CD4-positive, alpha-beta memory T cell (primary cell): ENCODE measurements at regions of chr7 and their contacts with region 1.

Region 1: DNA sequence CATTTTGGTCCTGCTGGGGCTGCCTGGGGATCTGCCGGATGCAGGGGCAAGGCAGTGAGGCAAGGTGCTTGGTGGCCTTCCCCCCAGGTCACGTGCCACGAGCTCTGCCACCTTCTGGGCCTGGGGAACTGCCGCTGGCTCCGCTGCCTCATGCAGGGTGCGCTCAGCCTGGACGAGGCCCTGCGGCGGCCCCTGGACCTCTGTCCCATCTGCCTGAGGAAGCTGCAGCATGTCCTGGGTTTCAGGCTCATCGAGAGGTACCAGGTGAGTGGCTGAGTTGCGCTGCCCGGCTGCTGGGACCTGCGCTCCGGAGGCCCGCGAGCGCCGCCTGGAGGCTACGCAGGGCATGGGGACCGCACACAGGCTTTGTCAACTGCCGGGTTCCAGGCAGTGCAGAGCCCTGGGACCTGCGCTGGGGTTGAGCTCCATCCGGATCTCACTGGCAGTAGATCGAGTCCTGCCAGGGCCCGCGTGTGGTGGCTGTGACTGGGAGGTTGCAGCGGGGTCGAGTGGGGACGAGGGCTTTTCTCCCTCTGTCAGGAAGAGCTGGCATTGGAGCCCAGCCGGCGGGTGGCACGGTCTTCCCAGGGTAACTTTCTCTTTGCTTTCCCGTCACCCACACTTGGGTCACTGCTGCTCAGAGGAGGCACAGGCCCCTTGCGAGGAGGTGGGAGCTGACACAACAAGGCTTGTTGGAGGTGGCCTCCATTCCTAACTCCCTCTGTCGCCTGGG is 21.7 kb downstream of the AMZ1 start:
- DNase-seq: peak; percentile 75 to 81 (median 79)
- H3K4me3 ChIP-seq: peak overlapping the region in 1 of 2 donors; percentile 50
- H3K4me3 Mint-ChIP-seq: peak overlapping the region; percentile 69 to 87 (median 78)
- H3K27ac ChIP-seq: peak overlapping the region; percentile 42
- H3K27ac Mint-ChIP-seq: peak overlapping the region in 6 of 7 donors; percentile 86 to 96 (median 90)
- H3K4me1 ChIP-seq: peaks cover 41% of the 10 kb centered on the region
- H3K4me1 Mint-ChIP-seq: peaks cover 19 to 40% (median 27%) of the 10 kb centered on the region in 4 donors
- H3K27me3 ChIP-seq: no peaks in the 10 kb centered on the region
- H3K27me3 Mint-ChIP-seq: no peaks in the 10 kb centered on the region

Region 2: GRCh38 chr7:2477447-2478398 is 232.0 kb before region 1 on chr7:
- CTCF ChIA-PET with region 1: interaction called, 21 read pairs
- POLR2A ChIA-PET with region 1: no interaction called
- intact Hi-C with region 1: loop called (anchors 1 kb)
- DNase-seq: peak; percentile 54 to 69 (median 64)
- H3K4me3 ChIP-seq: no peak overlapping the region
- H3K4me3 Mint-ChIP-seq: peak overlapping the region in 2 of 8 donors; percentile 22 to 31
- H3K27ac ChIP-seq: no peak overlapping the region
- H3K27ac Mint-ChIP-seq: no peak overlapping the region
- H3K4me1 ChIP-seq: peaks cover 13% of the 10 kb centered on the region
- H3K4me1 Mint-ChIP-seq: peaks cover 0 to 4% (median 0%) of the 10 kb centered on the region in 4 donors
- H3K27me3 ChIP-seq: no peaks in the 10 kb centered on the region
- H3K27me3 Mint-ChIP-seq: no peaks in the 10 kb centered on the region

Region 3: DNA sequence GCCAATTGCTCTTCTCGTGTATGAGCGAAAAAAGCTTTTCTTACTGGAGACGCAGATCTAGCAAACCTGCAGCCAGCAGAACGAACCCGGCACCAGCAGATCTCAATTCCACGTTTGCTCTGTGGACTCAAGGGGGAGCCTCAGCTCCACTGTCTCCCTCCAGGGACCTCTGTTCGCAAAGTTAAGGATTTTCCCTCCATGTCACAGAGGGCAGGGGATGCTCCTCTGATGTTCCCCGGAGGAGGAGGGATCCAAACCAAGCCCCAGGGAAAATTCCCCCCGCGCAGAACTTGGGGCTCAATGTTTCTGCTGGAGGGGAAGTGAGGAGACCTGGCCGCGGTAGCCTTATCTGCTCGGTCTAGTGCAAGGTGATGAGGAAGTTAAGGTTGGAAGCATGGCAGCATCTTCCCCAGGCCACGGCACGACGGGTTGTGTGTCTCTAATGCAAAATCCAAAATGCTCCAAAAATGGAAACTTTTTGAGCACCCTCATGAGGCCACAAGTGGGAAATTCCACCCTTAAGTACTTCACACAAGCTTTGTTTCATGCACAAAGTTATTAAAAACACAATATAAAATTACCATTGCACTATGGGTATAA is 141.9 kb before region 1 on chr7:
- CTCF ChIA-PET with region 1: interaction called, 11 read pairs
- POLR2A ChIA-PET with region 1: no interaction called
- intact Hi-C with region 1: no loop called
- DNase-seq: no peak
- H3K4me3 ChIP-seq: no peak overlapping the region
- H3K4me3 Mint-ChIP-seq: no peak overlapping the region
- H3K27ac ChIP-seq: no peak overlapping the region
- H3K27ac Mint-ChIP-seq: no peak overlapping the region
- H3K4me1 ChIP-seq: peaks cover 7% of the 10 kb centered on the region
- H3K4me1 Mint-ChIP-seq: peaks cover 8 to 15% (median 10%) of the 10 kb centered on the region in 4 donors
- H3K27me3 ChIP-seq: no peaks in the 10 kb centered on the region
- H3K27me3 Mint-ChIP-seq: no peaks in the 10 kb centered on the region

Region 4: GRCh38 chr7:2680792-2681490 is 28.8 kb before region 1 on chr7:
- CTCF ChIA-PET with region 1: interaction called, 220 read pairs
- POLR2A ChIA-PET with region 1: no interaction called
- intact Hi-C with region 1: no loop called
- DNase-seq: peak in 4 of 5 donors; percentile 22 to 33 (median 30)
- H3K4me3 ChIP-seq: no peak overlapping the region
- H3K4me3 Mint-ChIP-seq: no peak overlapping the region
- H3K27ac ChIP-seq: no peak overlapping the region
- H3K27ac Mint-ChIP-seq: no peak overlapping the region
- H3K4me1 ChIP-seq: no peaks in the 10 kb centered on the region
- H3K4me1 Mint-ChIP-seq: no peaks in the 10 kb centered on the region
- H3K27me3 ChIP-seq: no peaks in the 10 kb centered on the region
- H3K27me3 Mint-ChIP-seq: peaks cover 4 to 7% of the 10 kb centered on the region in 2 donors

Region 5: GRCh38 chr7:2720582-2721491 is 11.1 kb after region 1 on chr7:
- CTCF ChIA-PET with region 1: interaction called, 64 read pairs
- POLR2A ChIA-PET with region 1: interaction called, 30 read pairs
- intact Hi-C with region 1: loop called (anchors 1 kb)
- DNase-seq: peak; percentile 41 to 74 (median 46)
- H3K4me3 ChIP-seq: no peak overlapping the region
- H3K4me3 Mint-ChIP-seq: peak overlapping the region in 5 of 8 donors; percentile 18 to 67 (median 40)
- H3K27ac ChIP-seq: no peak overlapping the region
- H3K27ac Mint-ChIP-seq: peak overlapping the region in 3 of 7 donors; percentile 16 to 53 (median 43)
- H3K4me1 ChIP-seq: peaks cover 48% of the 10 kb centered on the region
- H3K4me1 Mint-ChIP-seq: peaks cover 20 to 48% (median 32%) of the 10 kb centered on the region in 4 donors
- H3K27me3 ChIP-seq: no peaks in the 10 kb centered on the region
- H3K27me3 Mint-ChIP-seq: peaks cover 0 to 3% of the 10 kb centered on the region in 2 donors

Region 6: DNA sequence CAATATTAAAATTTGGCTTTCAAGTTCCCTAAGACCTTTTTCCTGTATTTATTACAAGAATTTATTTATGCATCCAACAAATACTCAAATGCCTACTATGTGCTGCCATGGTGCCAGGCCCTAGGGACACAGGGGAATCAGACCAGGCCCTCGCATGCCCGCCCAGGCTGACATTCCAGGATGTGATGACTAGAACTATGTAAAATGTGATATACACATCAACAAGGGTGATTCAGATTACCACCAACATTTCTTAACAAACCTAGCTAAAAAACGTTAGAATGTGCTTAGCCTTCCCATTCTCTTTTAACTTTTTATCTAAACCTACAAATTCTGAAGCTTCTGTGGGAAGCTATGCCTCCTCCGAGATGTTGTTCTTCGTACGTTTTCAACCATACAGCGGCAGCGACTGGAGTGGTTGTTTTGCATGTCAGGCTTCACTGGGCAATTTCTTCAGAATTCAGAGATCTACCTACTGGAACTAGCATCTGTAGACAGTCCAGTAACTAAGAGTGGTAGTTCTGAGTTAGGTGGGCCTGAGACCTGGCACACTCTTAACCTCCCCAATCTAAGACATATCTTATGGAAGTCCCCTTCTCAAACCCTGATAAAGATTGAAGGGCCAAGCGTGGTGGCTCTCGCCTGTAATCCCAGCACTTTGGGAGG is 112.3 kb after region 1 on chr7:
- CTCF ChIA-PET with region 1: no interaction called
- POLR2A ChIA-PET with region 1: no interaction called
- intact Hi-C with region 1: no loop called
- DNase-seq: no peak
- H3K4me3 ChIP-seq: no peak overlapping the region
- H3K4me3 Mint-ChIP-seq: no peak overlapping the region
- H3K27ac ChIP-seq: no peak overlapping the region
- H3K27ac Mint-ChIP-seq: peak overlapping the region in 2 of 7 donors; percentile 4 to 44
- H3K4me1 ChIP-seq: no peaks in the 10 kb centered on the region
- H3K4me1 Mint-ChIP-seq: peaks cover 10 to 39% (median 22%) of the 10 kb centered on the region in 4 donors
- H3K27me3 ChIP-seq: no peaks in the 10 kb centered on the region
- H3K27me3 Mint-ChIP-seq: no peaks in the 10 kb centered on the region

Region 7: DNA sequence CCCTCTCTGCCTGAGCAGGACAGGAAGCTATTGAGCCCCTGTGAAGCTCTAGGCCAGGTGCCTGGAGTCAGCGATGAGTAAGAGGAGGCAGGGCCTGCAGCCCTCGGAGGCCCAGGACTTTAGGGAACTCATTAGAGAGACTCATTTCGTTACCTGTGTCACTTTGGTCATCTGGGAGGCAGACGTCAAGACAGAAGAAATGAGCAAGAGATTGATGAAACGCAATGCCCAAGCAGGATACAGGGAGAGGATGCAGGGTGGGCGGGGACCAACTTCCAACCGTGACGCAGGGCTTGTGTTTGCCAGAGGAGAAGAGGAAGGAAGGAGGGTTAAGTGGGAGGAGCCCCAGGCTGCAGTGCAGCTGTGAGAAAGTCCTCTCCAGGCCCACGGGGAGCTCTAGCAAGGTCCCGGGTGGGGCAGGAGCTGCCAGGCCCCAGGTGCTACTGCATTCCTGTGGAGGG is 160.8 kb after region 1 on chr7:
- CTCF ChIA-PET with region 1: no interaction called
- POLR2A ChIA-PET with region 1: no interaction called
- intact Hi-C with region 1: no loop called
- DNase-seq: peak; percentile 50 to 75 (median 57)
- H3K4me3 ChIP-seq: peak overlapping the region; percentile 50 to 52
- H3K4me3 Mint-ChIP-seq: peak overlapping the region; percentile 78 to 89 (median 86)
- H3K27ac ChIP-seq: peak overlapping the region; percentile 45
- H3K27ac Mint-ChIP-seq: peak overlapping the region; percentile 66 to 86 (median 76)
- H3K4me1 ChIP-seq: peaks cover 36% of the 10 kb centered on the region
- H3K4me1 Mint-ChIP-seq: peaks cover 27 to 46% (median 36%) of the 10 kb centered on the region in 4 donors
- H3K27me3 ChIP-seq: no peaks in the 10 kb centered on the region
- H3K27me3 Mint-ChIP-seq: no peaks in the 10 kb centered on the region

Region 8: GRCh38 chr7:3942816-3943745 is 1233.4 kb after region 1 on chr7:
- CTCF ChIA-PET with region 1: no interaction called
- POLR2A ChIA-PET with region 1: no interaction called
- intact Hi-C with region 1: no loop called
- DNase-seq: no peak
- H3K4me3 ChIP-seq: no peak overlapping the region
- H3K4me3 Mint-ChIP-seq: no peak overlapping the region
- H3K27ac ChIP-seq: no peak overlapping the region
- H3K27ac Mint-ChIP-seq: no peak overlapping the region
- H3K4me1 ChIP-seq: no peaks in the 10 kb centered on the region
- H3K4me1 Mint-ChIP-seq: no peaks in the 10 kb centered on the region
- H3K27me3 ChIP-seq: no peaks in the 10 kb centered on the region
- H3K27me3 Mint-ChIP-seq: peaks cover 3 to 9% of the 10 kb centered on the region in 2 donors